Astrocyte of the cerebellum (primary cell): ENCODE measurements at regions of chr5 and their contacts with region 1.

Region 1: GRCh38 chr5:39554159-39554558 is 129.4 kb upstream of the DAB2 start:
- DNase-seq: no peak
- H3K4me3 ChIP-seq: no peak overlapping the region
- CTCF ChIP-seq: no peak

Region 2: DNA sequence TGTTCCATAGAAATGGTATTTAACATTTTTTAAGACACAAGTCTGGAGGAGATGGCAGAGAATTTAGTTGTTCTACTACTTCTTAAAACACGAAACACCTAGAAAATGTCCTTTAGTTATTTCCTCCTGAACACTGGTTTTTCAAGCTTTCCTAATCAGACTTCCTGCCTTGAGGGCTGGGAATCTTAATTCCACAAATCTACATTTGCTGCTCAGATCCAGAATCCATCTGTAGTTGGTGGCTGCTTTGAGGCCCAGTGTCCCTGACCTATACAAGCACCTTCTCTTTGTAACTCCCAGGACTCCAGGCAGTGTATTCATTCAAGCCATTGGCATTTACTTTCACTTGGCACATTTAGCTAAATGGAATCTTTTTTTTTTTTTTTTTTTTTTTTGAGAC is 73.4 kb before region 1 on chr5:
- in situ Hi-C with region 1: loop called (anchors 5 kb)
- DNase-seq: no peak
- H3K4me3 ChIP-seq: no peak overlapping the region
- CTCF ChIP-seq: no peak